H1 (cell line): ENCODE measurements at regions of chr21 and their contacts with region 1.

Region 1: GRCh38 chr21:44510508-44511210 is 29.3 kb downstream of the KRTAP10-1 start:
- DNase-seq: peak; percentile 43 to 91
- H3K4me3 ChIP-seq: peak overlapping the region in 1 of 4 experiments; percentile 35; a peak in 1 of 8 replicates
- H3K27ac ChIP-seq: no peak overlapping the region
- H3K4me1 ChIP-seq: no peaks in the 10 kb centered on the region; a peak in 3 of 7 replicates
- H3K27me3 ChIP-seq: no peaks in the 10 kb centered on the region
- CTCF ChIP-seq: peak in 2 of 3 experiments; percentile 88 to 92; a peak in 3 of 4 replicates
- EP300 ChIP-seq: no peak
- POLR2A ChIP-seq: no peak
- RAD21 ChIP-seq: peak; percentile 90 to 96

Region 2: GRCh38 chr21:44267655-44268142 is 243.0 kb before region 1 on chr21:
- CTCF ChIA-PET with region 1: no interaction called
- POLR2A ChIA-PET with region 1: no interaction called
- DNase-seq: peak in 1 of 2 experiments; percentile 66
- H3K4me3 ChIP-seq: no peak overlapping the region
- H3K27ac ChIP-seq: no peak overlapping the region
- H3K4me1 ChIP-seq: peaks cover 0 to 7% (median 4%) of the 10 kb centered on the region in 4 experiments; a peak in 6 of 7 replicates
- H3K27me3 ChIP-seq: no peaks in the 10 kb centered on the region
- CTCF ChIP-seq: peak; percentile 49 to 66 (median 50)
- EP300 ChIP-seq: no peak
- POLR2A ChIP-seq: no peak
- RAD21 ChIP-seq: peak; percentile 56 to 64

Region 3: DNA sequence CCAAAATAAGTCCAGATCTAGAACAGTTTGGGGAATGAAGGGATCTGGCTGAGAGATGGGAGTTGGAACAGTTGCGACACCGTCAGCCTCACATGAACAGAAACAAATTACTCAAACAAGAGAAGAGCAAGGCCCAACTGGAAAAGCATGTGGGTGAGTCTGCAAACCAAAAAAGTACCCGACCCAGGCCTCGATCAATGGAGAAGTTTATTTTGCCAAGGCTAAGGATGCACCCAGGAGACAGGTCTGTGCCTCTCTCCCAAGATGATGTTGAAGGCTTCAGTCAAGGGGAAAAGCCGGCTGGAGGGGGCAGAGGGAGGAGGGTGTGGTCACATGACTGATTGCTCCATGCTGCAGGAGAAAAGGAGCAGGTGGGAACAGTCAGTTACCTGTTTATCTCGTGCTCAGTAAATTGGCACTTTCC is 12.9 kb before region 1 on chr21:
- CTCF ChIA-PET with region 1: interaction called, 12 read pairs
- POLR2A ChIA-PET with region 1: interaction called, 5 read pairs
- DNase-seq: no peak
- H3K4me3 ChIP-seq: no peak overlapping the region
- H3K27ac ChIP-seq: no peak overlapping the region
- H3K4me1 ChIP-seq: peaks cover 0 to 21% (median 8%) of the 10 kb centered on the region in 4 experiments; a peak in 5 of 7 replicates
- H3K27me3 ChIP-seq: no peaks in the 10 kb centered on the region; a peak in 1 of 7 replicates
- CTCF ChIP-seq: no peak
- EP300 ChIP-seq: no peak
- POLR2A ChIP-seq: no peak
- RAD21 ChIP-seq: no peak

Region 4: GRCh38 chr21:44520955-44521622 is 10.4 kb after region 1 on chr21:
- CTCF ChIA-PET with region 1: interaction called, 17 read pairs
- POLR2A ChIA-PET with region 1: interaction called, 9 read pairs
- DNase-seq: no peak
- H3K4me3 ChIP-seq: no peak overlapping the region
- H3K27ac ChIP-seq: no peak overlapping the region
- H3K4me1 ChIP-seq: peaks cover 0 to 3% (median 0%) of the 10 kb centered on the region in 4 experiments; a peak in 1 of 7 replicates
- H3K27me3 ChIP-seq: peaks cover 0 to 3% (median 0%) of the 10 kb centered on the region in 4 experiments; a peak in 1 of 7 replicates
- CTCF ChIP-seq: no peak
- EP300 ChIP-seq: no peak
- POLR2A ChIP-seq: no peak
- RAD21 ChIP-seq: no peak

Region 5: GRCh38 chr21:44531228-44532172 is 20.8 kb after region 1 on chr21:
- CTCF ChIA-PET with region 1: interaction called, 10 read pairs
- POLR2A ChIA-PET with region 1: interaction called, 3 read pairs
- DNase-seq: no peak
- H3K4me3 ChIP-seq: no peak overlapping the region
- H3K27ac ChIP-seq: no peak overlapping the region
- H3K4me1 ChIP-seq: peaks cover 0 to 3% (median 0%) of the 10 kb centered on the region in 4 experiments; a peak in 1 of 7 replicates
- H3K27me3 ChIP-seq: no peaks in the 10 kb centered on the region
- CTCF ChIP-seq: no peak
- EP300 ChIP-seq: no peak
- POLR2A ChIP-seq: no peak
- RAD21 ChIP-seq: no peak

Region 6: DNA sequence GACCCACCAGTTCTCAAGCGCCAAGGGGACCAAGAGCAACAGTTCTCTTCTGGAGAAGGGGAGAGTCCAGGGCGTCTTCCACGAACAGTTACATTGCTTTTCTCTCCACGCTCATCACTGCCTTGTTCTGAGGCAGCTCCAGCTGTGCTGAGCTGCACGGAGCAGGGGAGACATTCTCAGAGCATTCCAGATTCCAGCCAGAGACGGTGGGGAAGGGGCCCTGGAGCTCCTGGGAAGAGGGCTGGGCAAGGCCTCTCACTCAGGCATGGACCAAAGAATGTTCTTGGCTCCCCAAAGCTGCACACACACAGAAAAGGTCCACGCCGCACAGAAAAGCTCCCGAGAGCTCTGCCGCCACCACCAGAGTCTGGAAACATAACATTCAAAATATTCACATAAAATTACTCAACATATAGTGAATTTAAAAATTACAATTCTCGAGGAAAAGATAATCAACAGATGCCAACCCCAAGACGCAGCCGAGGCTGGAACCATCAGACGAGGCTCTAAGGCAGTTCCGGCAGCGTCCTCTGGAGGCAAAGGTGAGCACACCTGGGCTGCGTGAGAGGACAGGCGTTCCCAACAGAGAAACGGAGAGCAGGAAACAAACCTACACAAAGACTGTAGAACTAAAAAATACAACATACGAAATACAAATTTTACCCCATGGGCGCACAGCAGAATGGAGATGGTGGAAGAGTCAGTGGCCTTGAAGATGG is 250.5 kb after region 1 on chr21:
- CTCF ChIA-PET with region 1: interaction called, 10 read pairs
- POLR2A ChIA-PET with region 1: no interaction called
- DNase-seq: no peak
- H3K4me3 ChIP-seq: no peak overlapping the region
- H3K27ac ChIP-seq: no peak overlapping the region
- H3K4me1 ChIP-seq: peaks cover 0 to 35% (median 15%) of the 10 kb centered on the region in 4 experiments; a peak in 6 of 7 replicates
- H3K27me3 ChIP-seq: no peaks in the 10 kb centered on the region
- CTCF ChIP-seq: peak in 2 of 3 experiments; percentile 67 to 90; a peak in 3 of 4 replicates
- EP300 ChIP-seq: no peak
- POLR2A ChIP-seq: no peak
- RAD21 ChIP-seq: peak; percentile 65 to 79